ENCODE measurements at regions of chr3 and their contacts with region 1.

Region 1: GRCh38 chr3:46705022-46705530 is 3.9 kb downstream of the TMIE start:
- DNase-seq: peak; percentile 19
- ATAC-seq: peak; percentile 96
- H3K4me3 ChIP-seq: no peak overlapping the region
- H3K27ac ChIP-seq: no peak overlapping the region
- H3K4me1 ChIP-seq: no peaks in the 10 kb centered on the region
- H3K27me3 ChIP-seq: peaks cover 2 to 7% of the 10 kb centered on the region in 2 experiments; a peak in 2 of 4 replicates
- CTCF ChIP-seq: peak; percentile 93 to 98 (median 95); a peak in 5 of 6 replicates
- EP300 ChIP-seq: no peak
- POLR2A ChIP-seq: no peak
- RAD21 ChIP-seq: peak; percentile 95

Region 2: GRCh38 chr3:46496741-46497554 is 208.1 kb before region 1 on chr3:
- CTCF ChIA-PET with region 1: no interaction called
- POLR2A ChIA-PET with region 1: no interaction called
- RAD21 ChIA-PET with region 1: no interaction called
- SMC1A ChIA-PET with region 1: no interaction called
- in situ Hi-C with region 1: no loop called
- intact Hi-C with region 1: no loop called
- DNase-seq: peak; percentile 8
- ATAC-seq: peak; percentile 65
- H3K4me3 ChIP-seq: no peak overlapping the region
- H3K27ac ChIP-seq: no peak overlapping the region
- H3K4me1 ChIP-seq: peaks cover 21% of the 10 kb centered on the region
- H3K27me3 ChIP-seq: peaks cover 0 to 3% of the 10 kb centered on the region in 2 experiments; a peak in 1 of 4 replicates
- CTCF ChIP-seq: peak; percentile 39 to 51 (median 47); a peak in 5 of 6 replicates
- EP300 ChIP-seq: no peak
- POLR2A ChIP-seq: no peak
- RAD21 ChIP-seq: peak; percentile 65

Region 3: GRCh38 chr3:47009225-47010110 is 304.4 kb after region 1 on chr3:
- CTCF ChIA-PET with region 1: no interaction called
- POLR2A ChIA-PET with region 1: no interaction called
- RAD21 ChIA-PET with region 1: no interaction called
- SMC1A ChIA-PET with region 1: no interaction called
- in situ Hi-C with region 1: no loop called
- intact Hi-C with region 1: loop called (anchors 10 kb)
- DNase-seq: peak; percentile 40
- ATAC-seq: peak; percentile 96
- H3K4me3 ChIP-seq: peak overlapping the region; percentile 36; the same call in 1 of the 2 replicates
- H3K27ac ChIP-seq: peak overlapping the region; percentile 66
- H3K4me1 ChIP-seq: peaks cover 5% of the 10 kb centered on the region; the same call in 1 of the 2 replicates
- H3K27me3 ChIP-seq: no peaks in the 10 kb centered on the region
- CTCF ChIP-seq: no peak
- EP300 ChIP-seq: no peak
- POLR2A ChIP-seq: peak; percentile 34; the same call in 1 of the 2 replicates
- RAD21 ChIP-seq: no peak